Activated CD8-positive, alpha-beta T cell treated with anti-CD3 and anti-CD28 coated beads, Interleukin-2, amount 10 ng/mL, durations not matched to agents 7 days and 5 days (primary cell): ENCODE measurements at regions of chr2 and their contacts with region 1.

Region 1: GRCh38 chr2:135797497-135798274 is 39.3 kb downstream of the LCT start:
- DNase-seq: peak; percentile 87
- ATAC-seq: peak; percentile 87
- H3K4me3 Mint-ChIP-seq: no peak overlapping the region
- H3K27ac Mint-ChIP-seq: no peak overlapping the region
- H3K4me1 Mint-ChIP-seq: peaks cover 23% of the 10 kb centered on the region
- H3K27me3 Mint-ChIP-seq: no peaks in the 10 kb centered on the region

Region 2: DNA sequence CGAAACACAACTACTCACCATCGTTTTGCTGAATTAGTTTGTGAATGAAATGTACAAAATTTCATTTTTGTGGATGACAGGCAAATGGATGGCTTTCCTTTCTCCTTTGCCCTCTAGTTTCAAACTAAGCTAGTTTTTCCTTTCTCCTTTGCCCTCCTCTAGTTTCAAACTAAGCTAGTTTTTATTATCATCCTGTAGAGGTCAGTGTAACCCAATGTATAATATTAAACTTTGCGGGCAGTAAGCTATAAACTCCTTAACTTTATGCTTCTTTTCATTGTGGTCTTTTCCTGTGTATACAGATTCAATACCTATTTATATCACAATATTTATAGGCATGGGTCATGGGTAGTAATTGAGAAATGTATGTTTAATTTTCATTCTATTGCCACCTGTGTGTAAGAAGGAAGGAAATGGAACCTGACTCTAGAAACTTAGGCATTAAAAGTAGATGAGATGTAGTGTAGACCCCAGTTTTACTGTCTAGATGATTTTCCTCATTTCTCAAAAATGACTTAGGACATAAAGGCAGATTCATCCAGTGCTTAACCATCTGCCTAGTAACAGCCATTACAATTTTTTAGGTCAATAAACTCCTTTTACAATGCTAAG is 808.6 kb before region 1 on chr2:
- CTCF ChIA-PET with region 1: interaction called, 10 read pairs
- POLR2A ChIA-PET with region 1: no interaction called
- DNase-seq: no peak
- ATAC-seq: no peak
- H3K4me3 Mint-ChIP-seq: no peak overlapping the region
- H3K27ac Mint-ChIP-seq: no peak overlapping the region
- H3K4me1 Mint-ChIP-seq: peaks cover under 1% of the 10 kb centered on the region
- H3K27me3 Mint-ChIP-seq: peaks cover 10% of the 10 kb centered on the region

Region 3: DNA sequence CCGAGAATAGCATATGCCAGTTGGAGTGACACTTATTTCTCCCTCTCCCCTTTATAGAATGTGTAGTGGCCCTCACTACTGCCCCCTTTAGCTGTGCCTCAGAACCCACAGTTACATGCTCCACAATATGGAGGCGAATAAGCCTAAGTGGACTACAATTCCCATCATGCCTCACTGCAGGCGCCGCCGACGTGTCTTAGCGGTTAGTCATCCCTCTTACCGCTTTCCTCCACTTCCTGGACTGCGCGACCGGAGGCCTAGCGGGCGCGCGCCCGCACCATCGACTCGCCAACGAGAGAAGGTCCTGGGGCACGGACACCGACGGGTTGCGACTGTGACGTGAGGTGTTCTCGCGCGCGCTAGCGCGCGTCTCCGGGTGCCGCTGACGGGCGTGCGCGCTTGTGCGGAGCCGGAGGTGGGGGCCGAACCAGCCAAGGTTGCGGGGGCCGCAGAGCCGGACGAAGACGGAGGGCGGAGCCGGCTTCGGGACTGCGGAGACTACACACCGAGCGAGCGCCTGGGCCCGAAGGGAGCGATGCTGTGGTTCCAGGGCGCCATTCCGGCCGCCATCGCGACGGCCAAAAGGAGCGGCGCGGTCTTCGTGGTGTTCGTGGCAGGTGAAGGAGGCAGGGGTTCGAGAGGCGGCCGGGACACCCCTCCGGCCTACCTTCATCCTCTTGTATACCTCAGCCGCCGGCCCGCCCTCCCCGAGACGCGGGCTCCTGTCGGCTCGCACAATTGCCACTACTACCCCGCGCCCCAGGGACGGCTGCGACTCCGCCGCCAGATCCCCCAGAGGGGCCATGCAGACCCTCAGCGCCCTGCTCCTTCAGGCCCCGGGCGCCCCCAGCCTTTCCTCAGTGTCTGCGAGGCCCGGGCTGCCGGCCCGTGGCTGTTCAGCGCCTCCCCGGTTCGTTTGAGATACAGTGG is 56.0 kb before region 1 on chr2 and contains the start of gene UBXN4:
- CTCF ChIA-PET with region 1: interaction called, 13 read pairs
- POLR2A ChIA-PET with region 1: interaction called, 6 read pairs
- DNase-seq: peak; percentile 97
- ATAC-seq: peak; percentile 94
- H3K4me3 Mint-ChIP-seq: peak within 1 kb of the TSS; percentile 97
- H3K27ac Mint-ChIP-seq: peak within 1 kb of the TSS; percentile 99
- H3K4me1 Mint-ChIP-seq: peaks cover 31% of the 10 kb centered on the region
- H3K27me3 Mint-ChIP-seq: no peaks in the 10 kb centered on the region
- total RNA-seq, gene UBXN4: 94.1 to 96.2 TPM

Region 4: DNA sequence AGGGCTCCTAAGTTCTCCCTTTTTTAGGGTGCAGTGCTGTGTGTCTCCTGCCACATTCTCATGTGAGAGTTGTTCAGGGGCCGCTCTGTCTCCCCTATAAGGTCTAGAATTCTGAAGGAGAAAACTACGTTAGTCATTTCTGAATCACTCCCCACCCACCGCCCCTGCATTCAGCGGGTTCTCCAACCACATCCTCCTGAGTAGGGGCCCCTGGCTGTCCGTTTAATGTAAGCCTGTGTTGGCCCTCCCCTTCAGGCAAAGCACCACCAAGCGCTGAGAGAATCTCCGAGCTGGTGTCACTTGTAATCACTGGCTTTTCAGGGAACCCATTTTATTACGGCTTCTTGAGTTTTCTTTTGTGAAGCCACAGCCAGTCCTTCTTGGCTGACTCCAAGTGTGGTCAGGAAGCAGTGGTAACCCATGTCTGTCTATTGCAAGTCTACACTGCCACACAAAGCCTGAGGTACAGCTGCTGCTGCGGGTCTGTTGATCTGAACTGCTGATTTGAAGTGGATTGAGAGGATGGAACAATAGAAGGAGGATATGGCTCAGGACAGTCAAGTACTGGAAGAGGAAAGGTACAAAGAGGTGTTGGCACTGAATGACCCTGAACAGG is 22.4 kb after region 1 on chr2:
- CTCF ChIA-PET with region 1: interaction called, 65 read pairs
- POLR2A ChIA-PET with region 1: no interaction called
- DNase-seq: peak; percentile 94
- ATAC-seq: peak; percentile 95
- H3K4me3 Mint-ChIP-seq: peak overlapping the region; percentile 54
- H3K27ac Mint-ChIP-seq: peak overlapping the region; percentile 87
- H3K4me1 Mint-ChIP-seq: peaks cover 52% of the 10 kb centered on the region
- H3K27me3 Mint-ChIP-seq: no peaks in the 10 kb centered on the region

Region 5: GRCh38 chr2:135839713-135840112 is 42.0 kb after region 1 on chr2:
- CTCF ChIA-PET with region 1: interaction called, 15 read pairs
- POLR2A ChIA-PET with region 1: no interaction called
- DNase-seq: no peak
- ATAC-seq: no peak
- H3K4me3 Mint-ChIP-seq: no peak overlapping the region
- H3K27ac Mint-ChIP-seq: no peak overlapping the region
- H3K4me1 Mint-ChIP-seq: peaks cover 48% of the 10 kb centered on the region
- H3K27me3 Mint-ChIP-seq: no peaks in the 10 kb centered on the region